ENCODE measurements at regions of chr10 and their contacts with region 1.

Region 1: GRCh38 chr10:121572859-121573537 is 25.2 kb downstream of the FGFR2 start:
- DNase-seq: no peak
- ATAC-seq: no peak
- H3K4me3 ChIP-seq: no peak overlapping the region
- H3K27ac ChIP-seq: 0 out of 2 replicates have a peak overlapping the region, but pooled peaks have one; percentile 9
- H3K4me1 ChIP-seq: peaks cover 19% of the 10 kb centered on the region
- H3K27me3 ChIP-seq: no peaks in the 10 kb centered on the region
- CTCF ChIP-seq: no peak

Region 2: DNA sequence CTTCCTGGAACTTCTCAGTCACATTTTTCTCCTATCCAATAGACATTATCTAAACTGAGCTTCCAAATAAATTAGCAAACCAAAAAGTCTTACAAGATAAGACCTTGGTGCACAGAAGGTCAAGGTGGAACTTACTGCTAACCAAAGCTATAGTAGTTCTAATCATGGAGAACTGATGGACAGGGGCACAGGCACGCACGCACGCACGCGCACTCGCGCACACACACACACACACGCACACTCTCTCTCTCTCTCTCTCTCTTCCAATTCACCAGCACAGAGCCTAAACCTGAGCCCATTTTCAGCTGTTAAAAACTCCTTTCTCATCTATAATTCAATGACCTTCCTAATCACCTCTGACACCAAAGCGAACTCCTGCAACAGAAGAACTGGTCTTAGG is 17.8 kb after region 1 on chr10:
- CTCF ChIA-PET with region 1: interaction called, 12 read pairs
- POLR2A ChIA-PET with region 1: no interaction called
- in situ Hi-C with region 1: no loop called
- intact Hi-C with region 1: no loop called
- DNase-seq: no peak
- ATAC-seq: no peak
- H3K4me3 ChIP-seq: no peak overlapping the region
- H3K27ac ChIP-seq: no peak overlapping the region
- H3K4me1 ChIP-seq: no peaks in the 10 kb centered on the region
- H3K27me3 ChIP-seq: no peaks in the 10 kb centered on the region
- CTCF ChIP-seq: no peak